ENCODE measurements at regions of chr2 and their contacts with region 1.

Region 1: DNA sequence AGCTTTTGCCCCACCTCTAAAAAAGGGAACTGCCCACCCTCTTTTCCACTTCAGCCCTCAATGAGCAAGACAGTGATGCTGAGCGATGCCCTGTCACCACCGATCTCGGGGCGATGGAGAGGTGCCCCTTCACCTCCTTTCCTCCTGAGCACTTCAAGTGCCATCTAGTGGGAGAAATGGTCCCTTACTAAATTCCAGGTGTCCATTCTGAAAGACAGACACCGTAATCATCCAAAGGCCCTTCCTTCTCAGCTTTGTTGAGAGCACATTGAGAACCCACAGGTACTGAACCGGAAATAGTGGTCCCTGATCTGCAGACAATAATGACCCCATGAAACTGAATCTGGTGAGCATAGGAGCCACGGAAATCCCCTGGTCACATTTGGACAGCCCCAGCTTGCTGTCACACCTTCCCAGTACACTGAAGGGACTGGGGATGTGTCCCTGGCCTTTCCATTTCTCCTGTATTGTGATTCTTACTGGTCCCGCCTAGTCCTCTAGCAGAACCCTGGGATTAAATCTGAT is 38.5 kb downstream of the KCTD18 start:
- DNase-seq: peak in 1 of 2 donors; percentile 63
- H3K4me3 ChIP-seq: no peak overlapping the region
- H3K27ac ChIP-seq: peak overlapping the region in 1 of 5 donors; percentile 3
- H3K4me1 ChIP-seq: peaks cover 0 to 12% (median 0%) of the 10 kb centered on the region in 4 donors
- H3K27me3 ChIP-seq: no peaks in the 10 kb centered on the region
- CTCF ChIP-seq: peak in 5 of 7 experiments; percentile 22 to 49 (median 38)
- EP300 ChIP-seq: no peak
- POLR2A ChIP-seq: no peak

Region 2: DNA sequence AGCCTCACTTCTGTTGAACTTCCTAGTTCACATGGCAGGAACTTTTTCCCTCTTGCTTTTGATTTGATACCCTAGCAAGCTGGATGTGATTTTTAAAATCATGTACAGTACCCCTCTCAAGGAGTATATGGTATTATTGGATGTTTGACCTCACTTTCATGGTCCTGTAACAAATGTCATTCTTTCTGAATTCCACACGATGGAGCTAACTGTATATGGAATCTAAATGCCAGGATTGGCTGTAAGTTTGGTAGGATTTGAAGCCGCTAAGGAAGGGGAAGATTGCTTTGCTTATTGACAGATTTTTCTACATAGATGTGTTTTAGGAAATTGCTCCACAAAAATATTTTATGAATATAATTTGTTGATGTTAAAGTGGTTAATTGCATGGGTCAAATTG is 497.7 kb before region 1 on chr2:
- intact Hi-C with region 1: loop called (anchors 5 kb)
- DNase-seq: peak in 1 of 2 donors; percentile 64
- H3K4me3 ChIP-seq: no peak overlapping the region
- H3K27ac ChIP-seq: no peak overlapping the region
- H3K4me1 ChIP-seq: peaks cover 0 to 9% (median 0%) of the 10 kb centered on the region in 4 donors
- H3K27me3 ChIP-seq: no peaks in the 10 kb centered on the region
- CTCF ChIP-seq: peak in 3 of 7 experiments; percentile 9 to 40 (median 34)
- EP300 ChIP-seq: no peak
- POLR2A ChIP-seq: no peak

Region 3: GRCh38 chr2:200319548-200320337 is 151.6 kb before region 1 on chr2:
- intact Hi-C with region 1: loop called (anchors 10 kb)
- DNase-seq: peak in 1 of 2 donors; percentile 49
- H3K4me3 ChIP-seq: no peak overlapping the region
- H3K27ac ChIP-seq: peak overlapping the region in 1 of 5 donors; percentile 31
- H3K4me1 ChIP-seq: peaks cover 5 to 60% (median 32%) of the 10 kb centered on the region in 4 donors
- H3K27me3 ChIP-seq: no peaks in the 10 kb centered on the region
- CTCF ChIP-seq: no peak
- EP300 ChIP-seq: no peak
- POLR2A ChIP-seq: no peak

Region 4: DNA sequence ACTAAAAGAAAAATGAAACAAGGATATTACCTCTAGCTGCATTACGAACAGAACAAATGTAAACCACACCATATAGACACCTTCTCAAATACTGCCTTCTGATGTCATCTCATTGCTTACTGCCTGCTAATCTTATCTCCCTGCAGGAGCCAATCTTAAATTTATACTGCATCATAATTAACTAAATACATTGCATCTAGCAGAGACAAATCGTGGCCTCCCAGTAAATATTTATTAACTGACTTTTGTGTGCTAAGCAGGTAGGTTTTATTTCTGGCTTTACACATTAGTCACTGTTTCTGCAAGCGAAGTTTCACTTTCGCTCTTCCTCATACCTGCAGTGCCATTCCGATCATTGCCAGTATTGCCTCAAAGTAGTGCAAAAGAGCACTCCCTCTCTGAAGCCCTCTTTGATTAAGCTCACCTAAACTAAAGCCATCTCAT is 97.4 kb before region 1 on chr2:
- intact Hi-C with region 1: no loop called
- DNase-seq: peak in 1 of 2 donors; percentile 83
- H3K4me3 ChIP-seq: peak overlapping the region; percentile 4 to 14 (median 12)
- H3K27ac ChIP-seq: peak overlapping the region in 4 of 5 donors; percentile 43 to 91 (median 78)
- H3K4me1 ChIP-seq: peaks cover 23 to 67% (median 47%) of the 10 kb centered on the region in 4 donors
- H3K27me3 ChIP-seq: no peaks in the 10 kb centered on the region
- CTCF ChIP-seq: no peak
- EP300 ChIP-seq: no peak
- POLR2A ChIP-seq: no peak